ENCODE measurements at regions of chr5 and their contacts with region 1.

Region 1: DNA sequence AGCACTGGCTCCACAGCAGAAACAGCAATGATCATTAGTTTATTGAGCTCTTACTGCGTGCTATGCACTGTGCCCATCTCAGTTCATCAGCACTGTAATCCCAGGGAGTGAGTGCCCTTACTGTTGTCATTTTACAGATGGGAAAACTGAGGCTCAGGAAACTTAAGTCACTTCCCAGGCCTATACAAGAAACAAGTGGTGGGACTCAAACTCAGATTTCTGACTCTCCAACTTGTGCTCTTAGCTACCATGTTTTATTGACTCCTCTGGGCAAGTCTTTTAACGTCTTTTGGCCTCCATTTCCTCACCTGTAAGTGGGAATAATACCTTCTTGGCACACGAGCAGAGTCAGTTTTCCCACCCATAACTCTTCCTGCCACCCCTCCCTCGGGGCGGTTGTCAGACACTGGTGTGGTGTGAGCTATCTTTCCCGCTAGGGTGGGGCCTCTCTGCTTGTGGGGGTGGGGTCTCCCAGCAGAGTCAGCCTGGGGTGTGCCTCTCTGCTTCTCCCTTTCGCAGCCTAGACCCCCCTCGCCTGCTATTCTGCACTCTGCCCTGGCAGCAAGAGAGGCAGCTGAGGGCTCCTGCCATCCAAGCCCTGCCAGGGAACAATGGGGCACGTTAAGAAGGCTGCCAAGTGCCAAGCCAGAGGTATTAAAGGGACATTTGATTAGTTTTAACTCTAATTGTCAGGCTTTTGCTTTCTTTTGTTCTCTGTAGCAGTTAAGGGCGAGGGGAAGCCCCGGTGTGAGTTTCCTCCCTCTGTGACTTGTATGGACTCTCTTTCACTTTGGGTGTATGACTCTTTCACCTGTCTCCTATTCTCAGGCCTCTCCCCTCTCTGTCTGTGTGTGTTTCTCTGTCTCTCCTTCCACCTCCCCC is 12.1 kb downstream of the GALNT10 start:
- DNase-seq: peak in 1 of 5 donors; percentile 45
- ATAC-seq: peak in 3 of 4 donors; percentile 51 to 54 (median 51)
- H3K4me3 ChIP-seq: no peak overlapping the region
- H3K27ac ChIP-seq: peak overlapping the region in 2 of 12 donors; percentile 23 to 30
- H3K4me1 ChIP-seq: peaks cover 0 to 33% (median 15%) of the 10 kb centered on the region in 12 donors
- H3K27me3 ChIP-seq: no peaks in the 10 kb centered on the region
- CTCF ChIP-seq: no peak
- POLR2A ChIP-seq: no peak

Region 2: GRCh38 chr5:154287136-154287535 is 84.5 kb after region 1 on chr5:
- intact Hi-C with region 1: loop called in 1 of 10 experiments (anchors 10 kb)
- DNase-seq: peak in 1 of 5 donors; percentile 27
- ATAC-seq: peak; percentile 28 to 81 (median 68)
- H3K4me3 ChIP-seq: no peak overlapping the region
- H3K27ac ChIP-seq: peak overlapping the region in 8 of 12 donors; percentile 23 to 70 (median 52)
- H3K4me1 ChIP-seq: peaks cover 0 to 38% (median 24%) of the 10 kb centered on the region in 12 donors
- H3K27me3 ChIP-seq: no peaks in the 10 kb centered on the region
- CTCF ChIP-seq: no peak
- POLR2A ChIP-seq: no peak

Measured in heart left ventricle (tissue), 16 donors.